PC-3 (cell line): ENCODE measurements at regions of chr18 and their contacts with region 1.

Region 1: GRCh38 chr18:79123948-79124347 is 54.8 kb downstream of the ATP9B start:
- DNase-seq: peak; percentile 19
- ATAC-seq: no peak
- H3K4me3 ChIP-seq: no peak overlapping the region
- H3K27ac ChIP-seq: no peak overlapping the region
- H3K4me1 ChIP-seq: no peaks in the 10 kb centered on the region
- H3K27me3 ChIP-seq: no peaks in the 10 kb centered on the region
- CTCF ChIP-seq: no peak

Region 2: DNA sequence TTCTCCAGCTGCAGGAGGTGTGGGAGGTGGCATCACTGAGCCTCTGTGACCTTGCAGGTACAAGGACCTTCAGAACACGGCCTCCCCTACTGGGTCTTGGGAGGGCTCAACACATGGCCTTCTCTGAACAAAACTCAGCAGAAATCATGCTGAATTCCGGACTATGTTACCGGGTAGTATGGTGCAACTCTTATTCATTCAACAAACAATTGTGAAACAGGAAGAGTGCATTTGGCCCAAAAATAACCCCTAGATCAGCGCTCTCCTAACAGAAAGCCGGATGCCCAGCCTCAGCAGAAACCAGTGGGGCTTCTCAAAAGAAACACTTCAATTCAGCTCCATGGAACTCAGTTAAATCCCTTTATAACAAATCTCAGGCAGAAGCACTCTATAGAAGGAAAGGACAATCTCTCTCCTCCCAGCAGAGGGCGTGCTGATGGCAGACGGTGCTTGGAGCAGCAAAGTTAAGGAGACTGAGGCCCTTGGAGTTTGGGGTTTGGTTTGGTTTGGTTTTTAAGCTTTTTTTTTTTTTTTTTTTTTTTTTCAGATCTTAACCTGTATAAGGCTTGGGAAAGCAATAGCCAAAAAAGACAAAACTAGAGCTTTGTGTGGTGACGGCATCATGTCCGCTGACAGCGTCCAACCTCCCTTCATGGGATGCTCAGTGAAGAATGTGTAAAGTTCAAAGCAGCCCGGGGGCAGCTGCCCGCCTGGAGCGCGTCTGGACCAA is 248.5 kb before region 1 on chr18:
- CTCF ChIA-PET with region 1: interaction called, 13 read pairs
- POLR2A ChIA-PET with region 1: no interaction called
- intact Hi-C with region 1: no loop called
- DNase-seq: peak; percentile 39
- ATAC-seq: 0 out of 2 replicates have a peak, but pooled peaks have one; percentile 37
- H3K4me3 ChIP-seq: no peak overlapping the region
- H3K27ac ChIP-seq: no peak overlapping the region
- H3K4me1 ChIP-seq: no peaks in the 10 kb centered on the region
- H3K27me3 ChIP-seq: peaks cover 53% of the 10 kb centered on the region
- CTCF ChIP-seq: peak; percentile 65

Region 3: GRCh38 chr18:78947291-78947690 is 176.7 kb before region 1 on chr18:
- CTCF ChIA-PET with region 1: no interaction called
- POLR2A ChIA-PET with region 1: no interaction called
- intact Hi-C with region 1: no loop called
- DNase-seq: no peak
- ATAC-seq: no peak
- H3K4me3 ChIP-seq: no peak overlapping the region
- H3K27ac ChIP-seq: no peak overlapping the region
- H3K4me1 ChIP-seq: no peaks in the 10 kb centered on the region
- H3K27me3 ChIP-seq: peaks cover 81% of the 10 kb centered on the region
- CTCF ChIP-seq: no peak

Region 4: DNA sequence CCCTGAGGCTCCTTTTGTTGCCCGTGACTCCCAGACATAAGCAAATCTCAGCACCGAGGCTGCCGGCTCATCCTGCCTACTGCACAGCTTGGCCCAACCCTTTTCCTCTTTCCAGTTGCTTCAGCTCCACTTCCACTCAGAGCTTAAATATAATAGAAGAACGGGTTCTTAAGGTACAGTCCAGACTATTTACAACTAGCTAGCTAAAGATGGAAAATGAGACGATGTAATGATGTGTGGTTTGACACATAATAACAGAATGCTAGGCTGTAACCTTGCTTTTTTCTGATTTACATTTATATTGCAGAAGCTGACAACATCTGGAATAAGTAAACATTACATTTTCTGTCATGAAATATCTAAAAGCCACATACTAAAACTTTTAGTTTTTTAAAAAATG is 81.7 kb before region 1 on chr18:
- CTCF ChIA-PET with region 1: no interaction called
- POLR2A ChIA-PET with region 1: no interaction called
- intact Hi-C with region 1: no loop called
- DNase-seq: no peak
- ATAC-seq: no peak
- H3K4me3 ChIP-seq: no peak overlapping the region
- H3K27ac ChIP-seq: no peak overlapping the region
- H3K4me1 ChIP-seq: no peaks in the 10 kb centered on the region
- H3K27me3 ChIP-seq: no peaks in the 10 kb centered on the region
- CTCF ChIP-seq: no peak